ENCODE measurements at regions of chr5 and their contacts with region 1.

Region 1: GRCh38 chr5:180670586-180671359 is 21.4 kb upstream of the FLT4 start:
- DNase-seq: peak; percentile 49 to 73 (median 66)
- ATAC-seq: peak; percentile 76
- H3K4me3 ChIP-seq: no peak overlapping the region
- H3K27ac ChIP-seq: no peak overlapping the region
- H3K4me1 ChIP-seq: peaks cover 18 to 20% of the 10 kb centered on the region in 2 experiments
- H3K27me3 ChIP-seq: peaks cover 9 to 33% of the 10 kb centered on the region in 2 experiments; a peak in 4 of 5 replicates
- CTCF ChIP-seq: peak; percentile 69 to 86 (median 85)
- EP300 ChIP-seq: no peak
- POLR2A ChIP-seq: no peak
- RAD21 ChIP-seq: peak; percentile 47 to 77

Region 2: GRCh38 chr5:180353048-180353979 is 317.5 kb before region 1 on chr5 and contains the start of gene GFPT2:
- CTCF ChIA-PET with region 1: no interaction called
- POLR2A ChIA-PET with region 1: no interaction called
- in situ Hi-C with region 1: no loop called
- intact Hi-C with region 1: no loop called
- DNase-seq: peak; percentile 78 to 100 (median 100)
- ATAC-seq: peak; percentile 98
- H3K4me3 ChIP-seq: peak within 1 kb of the TSS; percentile 36
- H3K27ac ChIP-seq: no peak within 1 kb of the TSS
- H3K4me1 ChIP-seq: peaks cover 0 to 23% of the 10 kb centered on the region in 2 experiments; a peak in 2 of 5 replicates
- H3K27me3 ChIP-seq: peaks cover 26 to 81% of the 10 kb centered on the region in 2 experiments; a peak in 4 of 5 replicates
- CTCF ChIP-seq: no peak
- EP300 ChIP-seq: no peak
- POLR2A ChIP-seq: no peak
- RAD21 ChIP-seq: no peak
- polyA plus RNA-seq, gene GFPT2: 0.08 TPM in 1 of 2 experiments, not detected in the other

Region 3: DNA sequence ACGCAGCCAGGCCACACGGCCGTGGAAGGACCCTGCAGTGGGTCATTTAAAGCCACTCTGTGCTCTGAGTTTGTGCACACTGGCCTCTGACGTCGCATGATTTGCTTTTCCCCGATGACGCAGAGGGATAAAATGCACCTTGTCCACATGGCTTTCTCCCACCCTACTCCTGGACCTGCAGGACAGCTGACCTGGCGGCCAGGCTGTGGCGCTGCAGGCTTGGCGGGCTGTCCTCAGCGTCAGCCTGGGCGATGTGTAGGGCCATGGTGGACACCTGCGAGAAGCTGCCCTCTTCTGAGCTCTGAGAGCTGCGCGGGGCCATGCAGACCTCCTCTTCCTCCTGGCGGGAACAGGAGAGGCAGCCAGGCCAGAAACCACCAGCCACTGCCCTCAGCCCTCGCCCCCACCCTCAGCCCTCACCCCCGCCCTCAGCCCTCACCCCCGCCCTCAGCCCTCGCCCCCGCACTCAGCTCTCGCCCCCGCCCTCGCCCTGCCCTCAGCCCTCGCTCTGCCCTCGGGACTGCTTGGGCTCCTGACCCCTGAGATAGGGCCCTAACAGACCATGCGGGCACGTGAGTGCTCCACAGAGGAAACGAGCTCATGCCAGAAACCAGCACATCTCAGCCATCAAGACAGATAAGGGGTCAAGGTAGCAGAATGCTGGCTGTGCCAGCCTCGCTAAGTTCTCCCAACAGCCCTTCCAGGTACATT is 59.5 kb before region 1 on chr5:
- CTCF ChIA-PET with region 1: interaction called, 4 read pairs
- POLR2A ChIA-PET with region 1: no interaction called
- in situ Hi-C with region 1: no loop called
- intact Hi-C with region 1: loop called (anchors 1 kb)
- DNase-seq: peak; percentile 71 to 81 (median 74)
- ATAC-seq: peak; percentile 97
- H3K4me3 ChIP-seq: no peak overlapping the region
- H3K27ac ChIP-seq: no peak overlapping the region
- H3K4me1 ChIP-seq: peaks cover 10 to 46% of the 10 kb centered on the region in 2 experiments; a peak in 4 of 5 replicates
- H3K27me3 ChIP-seq: peaks cover 20 to 41% of the 10 kb centered on the region in 2 experiments; a peak in 4 of 5 replicates
- CTCF ChIP-seq: peak; percentile 80 to 87 (median 81)
- EP300 ChIP-seq: no peak
- POLR2A ChIP-seq: no peak
- RAD21 ChIP-seq: peak; percentile 67 to 86